ENCODE measurements at regions of chr3 and their contacts with region 1.

Region 1: DNA sequence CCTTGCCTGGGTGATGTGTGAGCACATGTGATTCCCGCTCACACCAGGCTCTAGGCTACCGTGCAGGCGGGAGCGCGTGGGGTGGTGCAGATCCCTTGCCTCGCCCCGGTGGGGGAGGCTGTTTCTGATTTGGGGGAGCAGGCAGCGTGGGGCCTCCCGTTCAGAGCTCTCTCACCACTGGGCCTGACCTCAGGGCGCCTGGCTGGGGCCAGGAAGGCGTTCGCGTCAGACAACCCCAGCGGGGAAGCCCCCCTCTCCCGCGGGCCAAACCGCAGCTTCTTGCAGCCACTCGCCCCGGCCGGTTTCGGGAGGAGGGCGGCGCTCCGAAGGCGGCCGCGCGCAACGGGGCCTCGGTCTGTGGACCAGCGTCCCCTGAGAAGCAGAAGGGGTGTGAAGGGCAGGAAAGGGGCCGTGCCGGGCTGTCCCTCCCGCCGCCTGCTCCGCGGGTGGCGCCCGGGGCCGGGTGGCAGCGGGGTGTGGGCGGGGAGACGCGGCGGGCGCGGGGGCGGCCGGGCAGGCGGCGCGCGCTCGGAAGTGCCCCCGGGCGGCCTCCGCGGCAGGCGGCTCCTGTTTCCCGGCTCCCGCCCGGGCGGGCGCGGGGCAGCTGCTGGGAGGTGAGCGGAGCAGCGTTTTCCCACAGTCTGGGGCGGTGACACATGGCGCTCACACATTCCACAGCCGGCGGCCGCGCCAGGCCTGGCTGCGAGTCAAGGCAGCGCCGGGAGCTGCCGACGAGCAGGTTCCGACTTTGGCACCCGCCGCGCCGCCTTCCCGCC is 65.1 kb upstream of the HES1 start:
- DNase-seq: peak; percentile 40
- H3K4me3 Mint-ChIP-seq: peak overlapping the region; percentile 50
- H3K27ac Mint-ChIP-seq: no peak overlapping the region
- H3K4me1 Mint-ChIP-seq: peaks cover 21% of the 10 kb centered on the region
- H3K27me3 Mint-ChIP-seq: peaks cover 72% of the 10 kb centered on the region

Region 2: DNA sequence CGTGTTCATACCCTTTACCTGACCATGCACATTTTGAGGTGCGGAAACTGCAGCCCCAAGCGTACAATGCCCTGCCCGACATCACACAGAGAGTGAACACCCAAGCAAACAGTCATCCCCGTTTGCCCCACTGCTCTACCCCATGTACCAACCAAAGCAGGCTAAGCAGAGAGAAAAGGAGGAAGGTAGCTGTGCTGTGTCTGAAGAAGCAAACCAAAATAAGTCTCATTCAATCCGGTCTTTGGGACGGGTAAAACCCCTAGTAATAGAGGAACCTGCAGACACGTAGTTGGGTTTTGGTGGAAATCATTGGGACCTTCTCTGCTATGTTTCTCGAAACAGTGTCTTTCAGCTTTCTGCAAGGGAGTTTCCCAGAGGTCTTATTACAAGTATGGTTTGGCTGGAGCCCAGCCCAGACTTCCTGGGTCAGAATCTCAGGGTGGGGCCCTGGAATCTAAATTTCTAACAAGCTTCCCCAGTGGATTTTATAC is 99.5 kb before region 1 on chr3:
- intact Hi-C with region 1: loop called (anchors 5 kb)
- DNase-seq: no peak
- H3K4me3 Mint-ChIP-seq: no peak overlapping the region
- H3K27ac Mint-ChIP-seq: no peak overlapping the region
- H3K4me1 Mint-ChIP-seq: peaks cover 18% of the 10 kb centered on the region
- H3K27me3 Mint-ChIP-seq: peaks cover 69% of the 10 kb centered on the region

Measured in activated T-helper 2 cell treated with anti-CD3 and anti-CD28 coated beads, Interferon-gamma antibody, Interleukin-2, Interleukin-4, amounts not matched to agents 10 μg/mL and 5 μg/mL and 100 μg/mL, durations not matched to agents 14 hours and 24 hours and 36 hours (primary cell).